ENCODE measurements at regions of chr3 and their contacts with region 1.

Region 1: GRCh38 chr3:196192036-196192523 is 19.1 kb downstream of the ZDHHC19 start:
- DNase-seq: peak; percentile 57
- H3K4me3 Mint-ChIP-seq: no peak overlapping the region
- H3K27ac Mint-ChIP-seq: peak overlapping the region; percentile 92
- H3K4me1 Mint-ChIP-seq: peaks cover 60% of the 10 kb centered on the region
- H3K27me3 Mint-ChIP-seq: no peaks in the 10 kb centered on the region

Region 2: GRCh38 chr3:196179380-196180308 is 12.4 kb before region 1 on chr3:
- CTCF ChIA-PET with region 1: interaction called, 13 read pairs
- DNase-seq: peak; percentile 91
- H3K4me3 Mint-ChIP-seq: peak overlapping the region; percentile 56
- H3K27ac Mint-ChIP-seq: peak overlapping the region; percentile 98
- H3K4me1 Mint-ChIP-seq: peaks cover 65% of the 10 kb centered on the region
- H3K27me3 Mint-ChIP-seq: no peaks in the 10 kb centered on the region

Region 3: DNA sequence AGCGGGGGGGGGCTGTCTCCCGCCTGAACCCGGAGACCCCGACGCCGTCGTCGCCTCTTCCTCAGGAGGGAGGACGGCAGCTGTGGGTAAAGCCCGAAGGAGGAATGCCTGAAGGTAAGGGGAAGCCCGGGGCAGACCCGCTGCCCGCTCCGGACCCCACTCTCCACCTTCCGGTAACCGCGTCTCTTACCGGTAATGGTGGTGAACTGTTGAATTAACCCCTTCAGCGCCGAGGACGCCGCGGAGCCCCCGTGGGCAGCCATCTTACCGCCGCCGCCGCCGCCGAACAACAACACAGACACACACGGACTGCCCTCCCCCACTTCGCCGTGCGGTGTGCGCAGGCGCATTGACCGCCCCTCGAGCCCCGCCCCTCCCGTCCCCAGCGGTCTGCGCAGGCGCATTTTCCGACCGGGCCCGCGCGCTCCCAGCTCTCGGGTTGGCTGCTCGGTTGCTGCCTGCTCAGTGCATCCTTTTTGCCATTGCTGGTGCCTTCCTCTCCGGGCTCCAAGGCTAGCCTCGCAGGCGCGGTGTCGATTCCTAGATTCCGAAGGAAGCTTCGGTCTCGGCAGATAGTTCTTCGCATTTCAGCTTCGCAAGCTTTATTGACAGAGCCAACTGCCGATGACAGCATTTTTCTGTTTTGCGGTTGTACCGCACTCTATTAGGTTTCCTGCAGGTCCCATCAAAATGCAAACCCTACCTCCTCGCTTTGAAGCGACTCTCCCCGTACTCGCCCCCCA is 240.2 kb after region 1 on chr3 and contains the start of gene UBXN7:
- CTCF ChIA-PET with region 1: no interaction called
- DNase-seq: peak; percentile 96
- H3K4me3 Mint-ChIP-seq: peak within 1 kb of the TSS; percentile 71
- H3K27ac Mint-ChIP-seq: peak within 1 kb of the TSS; percentile 78
- H3K4me1 Mint-ChIP-seq: peaks cover 22% of the 10 kb centered on the region
- H3K27me3 Mint-ChIP-seq: peaks cover 6% of the 10 kb centered on the region

Measured in activated naive CD4-positive, alpha-beta T cell treated with anti-CD3 and anti-CD28 coated beads, Interleukin-2, amount 10 ng/mL, durations not matched to agents 7 days and 5 days (primary cell).